ENCODE measurements at regions of chr2 and their contacts with region 1.

Region 1: GRCh38 chr2:217899231-217900009 is 103.4 kb downstream of the TNS1 start:
- DNase-seq: peak; percentile 81
- ATAC-seq: peak; percentile 21

Region 2: DNA sequence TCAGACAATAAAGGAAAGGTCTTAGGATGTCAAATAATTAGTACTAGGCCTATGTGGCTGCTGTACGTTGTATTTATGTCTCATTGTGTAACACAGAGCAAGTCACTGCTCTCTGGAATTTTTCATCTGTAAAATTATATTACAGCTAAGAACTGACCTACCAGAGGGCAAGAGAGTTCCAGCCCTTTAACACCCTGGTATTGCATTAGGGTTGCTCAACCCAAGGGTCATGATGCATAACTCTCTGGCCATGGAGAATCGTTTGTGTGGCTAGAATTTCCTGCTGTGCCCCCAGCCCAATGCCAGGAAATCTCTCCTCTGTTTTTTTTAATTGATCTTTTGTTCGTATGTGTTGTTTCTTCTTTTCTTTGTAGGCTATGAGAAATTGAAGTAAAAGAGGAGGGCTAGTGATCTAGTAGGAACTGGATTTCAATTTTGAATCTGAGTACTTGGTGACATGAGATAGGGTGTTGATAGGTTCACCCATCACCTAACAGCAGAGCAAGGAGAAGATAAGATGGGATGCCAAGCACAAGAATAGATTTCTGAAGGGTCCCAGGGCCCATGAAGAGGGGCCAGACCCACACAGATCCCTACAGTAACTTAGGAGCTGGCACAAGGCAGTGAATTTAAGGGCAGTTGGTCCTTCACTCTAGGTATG is 468.4 kb before region 1 on chr2:
- intact Hi-C with region 1: no loop called
- DNase-seq: no peak
- ATAC-seq: no peak

Region 3: DNA sequence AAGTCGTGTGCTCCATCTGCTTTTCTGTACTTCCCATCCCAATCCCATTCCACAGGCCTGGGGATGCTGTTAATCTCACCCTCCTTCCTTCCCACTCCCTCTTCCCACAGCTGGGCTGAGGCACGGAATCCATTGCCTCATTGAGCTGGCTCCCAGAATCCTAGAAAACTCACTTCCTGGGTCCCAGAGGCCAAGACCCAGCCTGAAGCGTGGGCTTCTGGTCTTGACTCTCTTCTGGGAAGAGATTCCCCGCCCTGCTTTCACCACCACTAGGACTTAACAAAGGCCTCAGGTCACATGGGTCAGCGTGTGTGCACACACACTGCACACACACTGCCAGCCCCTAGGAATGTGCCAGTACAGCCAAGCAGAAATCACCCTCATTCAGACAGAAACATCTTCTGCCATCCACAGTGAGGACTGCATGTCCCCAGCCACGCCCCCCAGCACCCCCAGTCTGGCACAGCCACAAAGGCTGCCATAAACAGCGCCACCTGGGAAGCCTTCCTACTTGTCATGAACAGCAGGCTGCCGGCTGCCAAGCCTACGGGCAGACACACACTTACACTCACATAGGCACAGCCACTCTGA is 62.4 kb before region 1 on chr2:
- intact Hi-C with region 1: loop called (anchors 2 kb)
- DNase-seq: peak; percentile 91
- ATAC-seq: peak; percentile 68

Region 4: GRCh38 chr2:217919781-217920351 is 20.4 kb after region 1 on chr2:
- intact Hi-C with region 1: loop called (anchors 2 kb)
- DNase-seq: peak; percentile 67
- ATAC-seq: no peak

Region 5: DNA sequence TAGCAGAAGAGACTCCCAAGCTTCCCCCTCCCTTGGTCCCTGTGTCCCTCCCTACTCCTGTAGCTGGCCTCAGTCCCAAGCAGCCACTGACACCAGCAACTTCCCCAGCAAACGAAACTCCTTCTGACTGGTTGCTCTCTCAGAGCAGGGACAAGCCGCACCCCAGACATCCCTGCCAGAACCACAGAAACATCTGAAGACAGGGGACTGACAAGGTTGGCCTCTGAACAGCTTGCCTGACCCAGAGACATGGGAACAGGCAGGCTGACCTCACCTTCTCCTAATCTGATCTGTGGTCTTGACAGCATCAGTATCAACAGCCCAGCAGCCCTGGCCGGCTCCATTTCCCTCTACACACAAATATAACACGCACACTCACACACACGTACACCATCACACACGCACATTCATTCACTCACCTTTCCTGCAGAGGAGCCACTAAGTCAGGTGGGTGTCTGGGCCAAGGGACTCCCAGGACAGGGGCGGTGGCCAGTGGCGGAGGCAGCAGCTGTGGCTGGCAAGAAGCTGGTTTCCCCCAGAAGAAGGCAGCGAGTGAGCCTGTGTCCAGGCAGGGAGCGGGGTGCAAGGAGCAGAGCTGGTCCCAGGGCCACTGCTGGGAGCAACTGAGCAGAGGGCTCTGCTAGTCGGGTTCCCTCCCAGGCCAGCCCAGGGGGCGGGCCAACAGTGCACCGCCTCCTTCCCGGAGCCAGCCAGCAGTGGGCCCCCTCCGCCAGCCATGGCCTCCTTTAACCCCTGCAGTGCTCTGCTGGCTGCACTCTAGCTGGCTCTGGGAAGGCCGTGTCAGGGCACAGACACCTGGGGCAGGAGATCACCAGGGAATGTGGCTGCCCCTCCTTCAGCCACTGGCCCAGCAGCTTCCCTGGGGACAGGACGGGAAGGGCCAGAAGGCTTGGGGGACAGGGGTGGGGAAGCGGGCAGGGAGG is 44.3 kb after region 1 on chr2:
- intact Hi-C with region 1: loop called (anchors 5 kb)
- DNase-seq: peak; percentile 92
- ATAC-seq: peak; percentile 91

Measured in Right ventricle myocardium inferior (tissue), 1 donor.